SK-N-SH (cell line): ENCODE measurements at regions of chr18 and their contacts with region 1.

Region 1: DNA sequence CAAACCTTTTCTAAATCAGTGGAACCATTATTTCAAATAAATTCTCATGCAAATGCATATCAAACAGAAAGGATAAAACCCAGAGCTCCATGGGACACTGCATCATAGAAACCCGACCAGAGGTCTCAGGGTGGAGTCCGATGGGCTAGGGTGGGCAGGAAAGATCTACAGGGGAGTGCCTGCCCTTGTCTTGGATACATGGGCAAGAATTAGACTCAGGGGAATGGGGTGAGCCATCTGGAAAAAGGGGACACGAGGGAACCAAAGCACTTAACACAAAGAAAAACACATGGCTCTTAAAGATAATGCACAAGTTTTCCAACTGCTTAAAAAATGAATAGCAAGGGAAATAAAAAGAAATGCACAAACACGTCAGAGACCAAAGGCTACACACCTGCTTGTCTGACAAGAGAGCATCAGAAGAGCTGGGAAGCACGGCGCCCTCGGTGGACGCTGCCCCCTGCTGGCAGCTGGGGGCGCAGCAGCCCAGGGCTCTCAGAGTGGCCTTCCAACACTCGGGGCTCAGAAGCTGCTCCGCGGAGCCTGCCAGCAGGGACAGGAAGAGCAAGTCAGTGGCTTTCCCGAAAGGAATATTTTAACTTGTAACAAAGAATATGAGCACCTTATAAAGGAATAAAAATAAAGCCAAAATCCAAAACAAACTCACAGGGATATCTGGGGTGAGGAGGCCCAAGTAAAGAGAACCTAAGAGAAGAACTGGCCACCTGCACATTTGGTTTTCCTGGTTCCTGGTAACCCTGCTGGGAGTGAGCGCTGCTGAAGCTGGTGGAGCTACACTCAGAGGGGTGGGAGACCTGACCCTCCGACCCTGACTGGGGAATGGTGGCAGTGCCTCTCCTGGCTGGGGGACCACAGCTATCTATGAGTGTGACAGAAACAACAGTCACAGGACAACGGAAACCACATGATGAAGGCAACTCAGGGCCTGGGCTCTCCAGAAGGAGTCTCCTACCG is 54.5 kb downstream of the SIGLEC15 start:
- DNase-seq: peak; percentile 72
- H3K4me3 ChIP-seq: peak overlapping the region in 1 of 2 experiments; percentile 30; a peak in 1 of 4 replicates
- H3K27ac ChIP-seq: no peak overlapping the region
- H3K4me1 ChIP-seq: no peaks in the 10 kb centered on the region; a peak in 1 of 4 replicates
- H3K27me3 ChIP-seq: no peaks in the 10 kb centered on the region
- CTCF ChIP-seq: peak; percentile 99
- EP300 ChIP-seq: no peak
- RAD21 ChIP-seq: peak; percentile 79

Region 2: DNA sequence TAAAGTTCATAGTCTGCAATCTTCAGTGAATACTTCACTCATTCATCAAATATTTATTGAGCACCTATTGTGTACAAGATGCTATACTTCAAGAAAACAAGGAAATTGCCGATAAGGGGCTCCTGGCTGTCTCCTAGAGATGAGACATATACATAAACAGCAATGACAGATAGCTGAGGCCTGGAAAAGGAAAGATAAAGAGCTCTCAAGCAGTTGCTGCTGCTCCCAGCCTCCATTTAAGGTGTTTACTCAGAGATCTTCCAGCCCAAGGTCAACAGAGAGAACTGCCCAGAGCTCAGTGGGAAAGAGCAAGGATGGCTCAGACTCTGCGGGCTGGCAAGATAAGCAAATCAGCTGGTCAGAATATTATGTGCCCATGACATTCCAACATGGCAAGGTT is 268.0 kb before region 1 on chr18:
- CTCF ChIA-PET with region 1: no interaction called
- POLR2A ChIA-PET with region 1: no interaction called
- DNase-seq: no peak
- H3K4me3 ChIP-seq: no peak overlapping the region
- H3K27ac ChIP-seq: no peak overlapping the region
- H3K4me1 ChIP-seq: no peaks in the 10 kb centered on the region
- H3K27me3 ChIP-seq: peaks cover 14% of the 10 kb centered on the region; the same call in 1 of the 2 replicates
- CTCF ChIP-seq: no peak
- EP300 ChIP-seq: no peak
- RAD21 ChIP-seq: no peak

Region 3: DNA sequence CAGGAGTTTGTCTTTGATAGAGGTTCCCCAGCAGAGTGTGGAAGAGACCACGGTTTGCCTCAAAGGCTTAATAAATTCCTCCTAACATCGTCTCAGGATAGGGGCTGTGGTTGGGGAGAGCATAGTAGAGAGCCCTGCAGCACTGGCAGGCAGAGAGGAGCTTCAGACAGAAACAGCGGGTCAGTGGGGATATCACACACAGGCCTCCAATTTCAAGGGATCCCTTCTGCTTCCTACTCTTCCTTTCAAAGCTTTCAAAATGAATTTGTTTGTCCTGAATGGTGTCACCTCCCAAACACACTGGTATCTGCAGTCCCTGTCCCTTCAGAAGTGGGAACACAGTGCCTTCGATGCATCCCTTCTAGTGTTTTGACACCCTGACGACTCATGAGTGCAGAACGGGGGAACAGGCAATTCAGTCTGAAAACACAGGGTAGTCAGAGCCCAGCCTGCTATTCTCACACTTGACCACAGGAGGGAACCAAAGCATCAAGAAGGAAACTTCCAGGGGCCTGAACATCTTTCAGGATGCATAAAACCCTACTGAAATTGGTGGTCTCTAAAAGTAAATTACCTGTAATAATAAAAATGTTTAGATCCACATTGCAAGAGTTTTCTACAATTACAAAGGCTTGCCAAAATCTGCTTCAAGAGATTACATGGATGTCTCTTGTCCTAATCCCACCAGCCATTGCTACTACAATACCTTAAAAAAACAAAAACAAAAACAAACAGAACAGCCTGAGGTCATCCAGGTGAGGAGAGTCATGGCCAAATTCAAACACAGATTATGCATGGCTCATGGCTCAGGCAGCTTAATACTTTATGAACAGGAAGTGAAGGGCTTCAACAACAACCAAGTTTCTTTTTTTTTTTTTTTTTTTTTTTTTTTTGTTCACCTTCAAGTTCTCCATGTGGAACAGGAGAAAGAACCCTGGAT is 214.9 kb before region 1 on chr18:
- CTCF ChIA-PET with region 1: interaction called, 46 read pairs
- POLR2A ChIA-PET with region 1: no interaction called
- DNase-seq: peak; percentile 71
- H3K4me3 ChIP-seq: peak overlapping the region in 1 of 2 experiments; percentile 9; a peak in 1 of 4 replicates
- H3K27ac ChIP-seq: no peak overlapping the region
- H3K4me1 ChIP-seq: peaks cover 3 to 7% of the 10 kb centered on the region in 2 experiments; a peak in 3 of 4 replicates
- H3K27me3 ChIP-seq: no peaks in the 10 kb centered on the region
- CTCF ChIP-seq: peak; percentile 96
- EP300 ChIP-seq: no peak
- RAD21 ChIP-seq: peak; percentile 94

Region 4: DNA sequence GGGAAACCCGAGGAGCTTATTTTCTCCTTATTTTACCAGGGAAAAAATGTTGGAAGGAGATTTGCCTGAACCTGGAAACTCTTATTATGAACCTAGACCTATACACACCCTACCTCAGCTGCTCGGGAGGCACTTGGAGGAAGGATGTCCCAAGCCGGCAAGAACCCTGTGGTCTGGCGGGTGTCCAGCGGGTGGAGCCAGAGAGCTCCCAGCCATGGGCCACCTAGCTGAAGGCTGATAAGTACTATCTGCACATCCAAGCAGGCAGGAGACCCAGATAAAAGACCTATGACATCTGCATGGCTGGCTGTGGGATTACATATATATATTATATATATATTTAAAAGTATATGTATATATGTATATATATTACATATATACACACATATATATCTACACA is 157.1 kb before region 1 on chr18:
- CTCF ChIA-PET with region 1: interaction called, 73 read pairs
- POLR2A ChIA-PET with region 1: no interaction called
- DNase-seq: peak; percentile 81
- H3K4me3 ChIP-seq: peak overlapping the region in 1 of 2 experiments; percentile 36; a peak in 1 of 4 replicates
- H3K27ac ChIP-seq: no peak overlapping the region
- H3K4me1 ChIP-seq: peaks cover 0 to 17% of the 10 kb centered on the region in 2 experiments; a peak in 2 of 4 replicates
- H3K27me3 ChIP-seq: no peaks in the 10 kb centered on the region
- CTCF ChIP-seq: peak; percentile 80
- EP300 ChIP-seq: no peak
- RAD21 ChIP-seq: peak; percentile 82

Region 5: GRCh38 chr18:45891806-45892205 is 11.8 kb after region 1 on chr18:
- CTCF ChIA-PET with region 1: interaction called, 21 read pairs
- POLR2A ChIA-PET with region 1: no interaction called
- DNase-seq: no peak
- H3K4me3 ChIP-seq: no peak overlapping the region
- H3K27ac ChIP-seq: no peak overlapping the region
- H3K4me1 ChIP-seq: no peaks in the 10 kb centered on the region
- H3K27me3 ChIP-seq: no peaks in the 10 kb centered on the region
- CTCF ChIP-seq: no peak
- EP300 ChIP-seq: no peak
- RAD21 ChIP-seq: no peak

Region 6: GRCh38 chr18:46073474-46074331 is 193.7 kb after region 1 on chr18:
- CTCF ChIA-PET with region 1: interaction called, 14 read pairs
- POLR2A ChIA-PET with region 1: no interaction called
- DNase-seq: peak; percentile 57
- H3K4me3 ChIP-seq: no peak overlapping the region
- H3K27ac ChIP-seq: no peak overlapping the region
- H3K4me1 ChIP-seq: peaks cover 0 to 9% of the 10 kb centered on the region in 2 experiments; a peak in 1 of 4 replicates
- H3K27me3 ChIP-seq: no peaks in the 10 kb centered on the region
- CTCF ChIP-seq: peak; percentile 73
- EP300 ChIP-seq: no peak
- RAD21 ChIP-seq: peak; percentile 88